ENCODE measurements at regions of chr17 and their contacts with region 1.

Region 1: GRCh38 chr17:1977583-1978395 is 47.3 kb downstream of the RTN4RL1 start:
- DNase-seq: no peak
- H3K4me3 ChIP-seq: no peak overlapping the region
- H3K27ac ChIP-seq: no peak overlapping the region
- H3K4me1 ChIP-seq: peaks cover 9% of the 10 kb centered on the region
- H3K27me3 ChIP-seq: peaks cover 6% of the 10 kb centered on the region
- CTCF ChIP-seq: no peak

Region 2: DNA sequence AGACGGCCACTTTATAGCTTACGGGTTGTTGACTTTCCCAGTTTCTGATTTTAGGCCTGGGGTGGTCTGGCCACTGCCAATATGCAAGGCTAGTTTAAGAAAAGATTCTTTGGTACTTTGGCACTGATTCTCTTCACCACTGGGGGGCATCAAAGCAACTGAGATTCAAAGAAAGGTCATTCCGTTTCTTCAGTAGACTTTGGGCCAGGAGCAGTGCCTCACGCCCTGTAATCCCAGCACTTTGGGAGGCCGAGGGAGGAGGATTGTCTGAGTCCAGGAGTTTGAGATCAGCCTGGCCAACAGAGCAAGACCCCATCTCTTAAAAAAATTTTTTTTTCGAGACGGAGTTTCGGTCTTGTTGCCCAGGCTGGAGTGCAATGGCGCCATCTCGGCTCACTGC is 95.0 kb before region 1 on chr17:
- CTCF ChIA-PET with region 1: no interaction called
- dilution Hi-C with region 1: no loop called
- in situ Hi-C with region 1: no loop called
- intact Hi-C with region 1: no loop called
- DNase-seq: peak; percentile 15
- H3K4me3 ChIP-seq: no peak overlapping the region
- H3K27ac ChIP-seq: no peak overlapping the region
- H3K4me1 ChIP-seq: no peaks in the 10 kb centered on the region
- H3K27me3 ChIP-seq: no peaks in the 10 kb centered on the region
- CTCF ChIP-seq: peak; percentile 40 to 47

Region 3: GRCh38 chr17:1931759-1932579 is 45.8 kb before region 1 on chr17:
- CTCF ChIA-PET with region 1: no interaction called
- dilution Hi-C with region 1: loop called (anchors 5 kb)
- in situ Hi-C with region 1: no loop called
- intact Hi-C with region 1: no loop called
- DNase-seq: peak; percentile 8
- H3K4me3 ChIP-seq: no peak overlapping the region
- H3K27ac ChIP-seq: no peak overlapping the region
- H3K4me1 ChIP-seq: no peaks in the 10 kb centered on the region
- H3K27me3 ChIP-seq: peaks cover 3% of the 10 kb centered on the region
- CTCF ChIP-seq: no peak